Vagina (tissue), 2 donors: ENCODE measurements at regions of chr12 and their contacts with region 1.

Region 1: GRCh38 chr12:94140556-94140955 is 7.8 kb upstream of the PLXNC1 start:
- DNase-seq: no peak
- H3K4me3 ChIP-seq: no peak overlapping the region
- H3K27ac ChIP-seq: no peak overlapping the region
- H3K4me1 ChIP-seq: no peaks in the 10 kb centered on the region
- H3K27me3 ChIP-seq: no peaks in the 10 kb centered on the region
- CTCF ChIP-seq: no peak
- POLR2A ChIP-seq: no peak

Region 2: GRCh38 chr12:93802698-93803423 is 337.7 kb before region 1 on chr12:
- intact Hi-C with region 1: no loop called
- DNase-seq: no peak
- H3K4me3 ChIP-seq: no peak overlapping the region
- H3K27ac ChIP-seq: peak overlapping the region; percentile 84
- H3K4me1 ChIP-seq: peaks cover 32% of the 10 kb centered on the region
- H3K27me3 ChIP-seq: no peaks in the 10 kb centered on the region
- CTCF ChIP-seq: no peak
- POLR2A ChIP-seq: no peak

Region 3: GRCh38 chr12:94186278-94187241 is 46.0 kb after region 1 on chr12:
- intact Hi-C with region 1: no loop called
- DNase-seq: no peak
- H3K4me3 ChIP-seq: peak overlapping the region; percentile 12 to 32
- H3K27ac ChIP-seq: peak overlapping the region; percentile 5
- H3K4me1 ChIP-seq: peaks cover 10% of the 10 kb centered on the region
- H3K27me3 ChIP-seq: no peaks in the 10 kb centered on the region
- CTCF ChIP-seq: no peak
- POLR2A ChIP-seq: no peak

Region 4: DNA sequence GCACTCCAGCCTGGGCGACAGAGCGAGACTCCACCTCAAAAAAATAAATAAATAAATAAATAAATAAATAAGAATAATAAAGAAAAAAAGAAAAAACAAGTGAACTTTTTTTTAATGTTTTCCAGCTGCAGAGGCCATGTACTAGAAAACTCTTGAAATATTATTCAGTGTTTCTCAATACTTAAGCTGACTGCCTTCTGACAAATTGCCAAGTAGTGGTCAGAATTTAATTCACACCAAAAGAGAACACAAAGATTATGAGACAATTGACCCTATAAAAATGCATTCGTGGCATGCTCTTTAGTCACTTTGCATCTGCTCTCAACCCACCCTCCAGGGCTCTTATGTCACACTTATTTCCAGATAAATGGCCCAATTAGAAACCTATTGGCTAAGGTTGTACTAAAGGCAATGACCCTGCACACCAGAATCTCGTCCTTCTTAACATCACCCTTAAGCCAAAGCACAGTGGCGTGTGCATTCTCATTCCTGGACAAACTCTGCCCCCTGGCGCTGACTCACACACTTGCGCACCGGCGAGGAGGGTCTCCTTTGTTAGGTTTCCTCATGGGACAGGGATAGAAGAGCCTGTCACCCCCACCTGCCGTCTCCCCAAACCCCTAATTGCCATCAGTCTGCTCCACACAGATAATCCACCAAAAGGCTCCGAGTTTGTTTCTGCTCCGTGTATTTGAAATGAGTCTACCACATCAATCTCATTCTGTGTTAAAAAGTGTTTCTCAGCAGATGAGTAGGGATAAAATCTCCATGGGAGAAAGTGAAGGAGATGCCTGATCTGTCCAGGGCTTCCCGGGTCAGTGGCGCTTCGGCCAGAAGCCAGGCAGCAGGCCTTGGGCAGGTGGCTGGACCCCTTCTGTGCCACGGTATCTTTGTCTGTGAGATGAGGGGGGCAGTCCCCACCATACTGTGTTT is 392.2 kb after region 1 on chr12:
- intact Hi-C with region 1: loop called (anchors 5 kb)
- DNase-seq: peak in 1 of 2 donors; percentile 80
- H3K4me3 ChIP-seq: no peak overlapping the region
- H3K27ac ChIP-seq: no peak overlapping the region
- H3K4me1 ChIP-seq: no peaks in the 10 kb centered on the region
- H3K27me3 ChIP-seq: no peaks in the 10 kb centered on the region
- CTCF ChIP-seq: peak in 2 of 3 experiments; percentile 60 to 81
- POLR2A ChIP-seq: no peak